Sigmoid colon (tissue), 7 donors: ENCODE measurements at regions of chr13 and their contacts with region 1.

Region 1: DNA sequence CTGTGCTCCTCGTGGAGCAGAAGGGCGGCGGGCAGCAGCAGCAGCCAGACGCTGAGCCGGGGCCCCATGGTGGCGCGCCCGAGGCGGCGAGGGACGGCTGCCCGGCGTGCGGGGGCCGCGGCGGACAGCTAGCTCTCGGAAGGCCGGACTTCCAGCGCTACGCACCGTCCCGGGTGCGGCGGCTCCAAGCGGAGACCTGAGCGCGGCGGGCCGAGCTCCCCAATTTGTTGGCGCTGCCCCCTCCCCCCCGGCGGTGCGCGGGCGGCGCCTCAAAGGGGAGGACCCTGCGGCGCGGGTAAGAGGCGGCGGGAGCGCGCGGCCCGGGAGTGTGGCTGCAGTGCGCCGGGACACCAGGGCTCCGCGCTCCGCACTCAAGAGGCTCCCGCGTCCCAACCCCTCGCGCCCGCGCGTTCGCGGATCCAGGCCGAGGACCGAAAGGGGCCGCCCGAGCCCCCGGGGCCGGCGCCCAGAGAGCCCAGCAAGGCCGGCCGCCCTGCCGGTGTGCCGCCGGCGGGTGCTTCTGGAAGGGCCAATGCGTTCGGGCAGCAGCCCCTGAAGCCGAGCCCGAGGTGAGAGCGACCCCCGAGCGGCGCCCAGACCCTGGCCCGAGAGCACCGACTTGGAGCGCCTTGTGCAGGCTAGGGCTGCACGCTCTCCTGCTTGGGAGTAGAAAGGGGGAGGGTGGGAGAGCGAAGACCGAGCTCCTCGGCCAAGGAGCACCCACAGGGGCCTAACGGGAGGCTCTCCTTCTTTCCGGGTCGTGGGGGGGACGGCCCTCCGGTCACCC is at the starts of genes COL4A1 and COL4A2:
- DNase-seq: peak; percentile 95
- H3K4me3 ChIP-seq: peak within 1 kb of the TSS; percentile 83 to 99 (median 95)
- H3K27ac ChIP-seq: peak within 1 kb of the TSS; percentile 98 to 100 (median 99)
- H3K4me1 ChIP-seq: peaks cover 0 to 63% (median 61%) of the 10 kb centered on the region in 4 donors
- H3K27me3 ChIP-seq: no peaks in the 10 kb centered on the region
- CTCF ChIP-seq: no peak
- EP300 ChIP-seq: peak in 2 of 4 donors; percentile 12 to 28
- POLR2A ChIP-seq: peak; percentile 77 to 92
- total RNA-seq, gene COL4A1: 235 to 598 (median 350) TPM
- total RNA-seq, gene COL4A2: 306 to 1,039 (median 489) TPM

Region 2: GRCh38 chr13:110225609-110226562 is 81.3 kb before region 1 on chr13:
- intact Hi-C with region 1: loop called (anchors 2 kb)
- DNase-seq: no peak
- H3K4me3 ChIP-seq: no peak overlapping the region
- H3K27ac ChIP-seq: peak overlapping the region; percentile 85 to 97 (median 89)
- H3K4me1 ChIP-seq: peaks cover 0 to 72% (median 55%) of the 10 kb centered on the region in 4 donors
- H3K27me3 ChIP-seq: no peaks in the 10 kb centered on the region
- CTCF ChIP-seq: no peak
- EP300 ChIP-seq: no peak
- POLR2A ChIP-seq: no peak

Region 3: DNA sequence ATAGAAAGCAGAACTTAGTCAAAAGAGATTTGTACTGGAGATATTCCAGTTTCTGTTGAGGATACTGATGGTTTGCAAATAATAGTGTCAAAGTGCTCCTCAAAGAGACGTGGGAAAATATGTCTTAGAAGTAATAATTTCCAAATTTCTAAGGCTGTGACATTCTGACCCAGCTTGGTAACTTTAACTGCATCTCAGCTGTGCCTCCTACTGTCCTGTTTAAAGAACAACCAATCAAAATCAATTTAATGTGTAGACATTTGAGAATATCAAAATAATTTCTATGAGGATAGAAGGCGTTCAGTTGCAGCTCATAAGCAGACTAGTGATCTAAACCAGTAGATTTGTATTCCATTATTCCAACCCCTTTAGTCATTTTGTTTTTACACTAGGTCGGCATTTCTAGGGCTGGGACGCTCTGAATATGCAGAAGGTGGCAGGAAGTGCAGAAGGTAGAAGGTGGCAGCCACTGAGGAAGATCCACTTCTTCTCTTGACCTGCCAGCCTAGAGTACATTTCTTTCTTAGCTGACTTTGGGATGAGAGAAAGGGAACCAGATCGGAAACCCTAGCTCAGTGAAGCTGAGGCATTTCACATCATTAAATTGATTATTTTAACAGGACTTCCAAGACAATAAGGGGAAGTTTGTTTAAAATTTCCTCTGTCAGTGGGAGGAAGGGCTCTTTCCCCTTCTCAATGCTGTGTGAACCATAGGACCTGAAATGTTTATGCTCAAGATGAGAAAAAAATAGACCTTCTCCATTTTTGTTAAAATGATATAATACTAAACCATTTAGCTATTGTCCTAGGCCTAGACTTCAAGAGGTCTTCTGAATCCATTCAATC is 67.7 kb before region 1 on chr13:
- intact Hi-C with region 1: loop called (anchors 5 kb)
- DNase-seq: no peak
- H3K4me3 ChIP-seq: no peak overlapping the region
- H3K27ac ChIP-seq: peak overlapping the region; percentile 71 to 97 (median 82)
- H3K4me1 ChIP-seq: peaks cover 0 to 86% (median 75%) of the 10 kb centered on the region in 4 donors
- H3K27me3 ChIP-seq: no peaks in the 10 kb centered on the region
- CTCF ChIP-seq: no peak
- EP300 ChIP-seq: no peak
- POLR2A ChIP-seq: no peak

Region 4: GRCh38 chr13:110396913-110397381 is 89.8 kb after region 1 on chr13:
- intact Hi-C with region 1: loop called (anchors 5 kb)
- DNase-seq: peak; percentile 99
- H3K4me3 ChIP-seq: peak overlapping the region in 3 of 4 donors; percentile 9 to 24 (median 24)
- H3K27ac ChIP-seq: peak overlapping the region; percentile 90 to 96 (median 93)
- H3K4me1 ChIP-seq: peaks cover 0 to 84% (median 79%) of the 10 kb centered on the region in 4 donors
- H3K27me3 ChIP-seq: no peaks in the 10 kb centered on the region
- CTCF ChIP-seq: no peak
- EP300 ChIP-seq: peak; percentile 94 to 100 (median 94)
- POLR2A ChIP-seq: peak in 1 of 2 donors; percentile 14

Region 5: DNA sequence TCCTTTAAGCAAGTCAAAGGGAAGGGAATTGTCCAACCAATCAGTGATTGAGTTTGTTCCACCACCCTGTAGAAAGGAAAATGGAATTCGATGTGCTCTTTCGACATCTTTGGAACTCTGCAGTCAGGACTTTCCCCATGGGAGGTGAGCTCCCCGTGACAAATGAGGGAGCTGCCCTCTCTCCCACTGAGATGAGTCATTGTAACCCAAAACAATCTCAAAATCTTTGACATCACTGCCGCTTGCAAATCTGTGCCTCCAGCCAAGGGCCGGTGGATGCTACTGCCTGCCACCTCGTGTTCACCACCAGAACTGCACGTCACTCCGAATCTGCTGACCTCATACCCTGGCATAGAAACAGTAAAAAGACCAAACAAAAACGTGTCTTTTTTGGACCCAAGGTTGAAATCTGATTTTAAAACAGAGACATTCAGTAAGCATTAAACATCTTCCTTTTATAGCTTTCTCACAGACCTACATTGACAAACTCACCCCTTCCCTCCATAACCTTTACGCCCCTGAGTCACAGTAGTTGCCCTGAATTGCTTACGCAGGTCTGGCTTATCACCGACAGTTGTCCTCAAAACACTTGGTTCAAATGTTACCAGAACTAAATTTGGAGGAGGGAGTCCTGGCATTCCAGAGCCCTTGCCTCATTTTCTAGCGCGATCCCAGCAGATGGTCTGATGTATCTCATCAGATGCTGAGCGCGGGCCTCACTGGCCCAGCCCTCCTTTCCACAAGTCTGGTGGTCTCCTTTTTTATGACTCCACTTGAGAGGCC is 105.2 kb after region 1 on chr13:
- intact Hi-C with region 1: loop called (anchors 1 kb)
- DNase-seq: peak; percentile 98
- H3K4me3 ChIP-seq: no peak overlapping the region
- H3K27ac ChIP-seq: peak overlapping the region; percentile 87 to 98 (median 90)
- H3K4me1 ChIP-seq: peaks cover 2 to 93% (median 90%) of the 10 kb centered on the region in 4 donors
- H3K27me3 ChIP-seq: no peaks in the 10 kb centered on the region
- CTCF ChIP-seq: peak; percentile 76 to 96 (median 89)
- EP300 ChIP-seq: peak; percentile 78 to 99 (median 86)
- POLR2A ChIP-seq: no peak

Region 6: DNA sequence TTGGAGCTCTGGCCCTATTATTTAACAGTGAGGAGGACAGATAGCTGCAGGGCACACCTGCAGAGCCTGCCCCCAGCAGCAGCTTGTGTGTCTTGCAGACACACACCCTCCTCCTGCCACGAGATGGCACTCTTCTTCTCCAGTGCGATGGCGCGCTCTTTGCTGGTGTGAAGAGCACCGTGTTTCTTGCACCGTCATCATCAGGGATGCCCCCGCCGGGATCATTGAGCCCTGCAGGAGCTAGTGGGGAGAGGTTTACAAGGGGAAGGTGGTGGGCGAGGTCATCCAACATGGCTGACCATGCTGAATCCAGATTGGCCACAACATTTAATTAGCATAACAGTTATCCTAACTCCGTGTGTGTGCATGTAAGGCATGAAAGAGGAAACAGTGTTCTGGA is 148.8 kb after region 1 on chr13:
- intact Hi-C with region 1: no loop called
- DNase-seq: peak; percentile 92
- H3K4me3 ChIP-seq: no peak overlapping the region
- H3K27ac ChIP-seq: peak overlapping the region in 3 of 4 donors; percentile 71 to 98 (median 82)
- H3K4me1 ChIP-seq: peaks cover 0 to 38% (median 36%) of the 10 kb centered on the region in 4 donors
- H3K27me3 ChIP-seq: no peaks in the 10 kb centered on the region
- CTCF ChIP-seq: peak; percentile 76 to 85 (median 78)
- EP300 ChIP-seq: no peak
- POLR2A ChIP-seq: no peak